ENCODE measurements at regions of chr1 and their contacts with region 1.

Region 1: GRCh38 chr1:232629250-232630046 is 485 bp downstream of the SIPA1L2 start:
- DNase-seq: peak; percentile 45 to 46
- H3K4me3 ChIP-seq: peak overlapping the region; percentile 5 to 62 (median 32)
- H3K27ac ChIP-seq: peak overlapping the region in 2 of 3 donors; percentile 41 to 59
- H3K4me1 ChIP-seq: peaks cover 21 to 24% of the 10 kb centered on the region in 2 donors
- H3K27me3 ChIP-seq: no peaks in the 10 kb centered on the region
- CTCF ChIP-seq: peak in 1 of 6 experiments; percentile 3
- POLR2A ChIP-seq: no peak

Region 2: GRCh38 chr1:231866392-231867331 is 762.8 kb before region 1 on chr1:
- intact Hi-C with region 1: loop called (anchors 10 kb)
- DNase-seq: peak; percentile 51 to 61
- H3K4me3 ChIP-seq: no peak overlapping the region
- H3K27ac ChIP-seq: no peak overlapping the region
- H3K4me1 ChIP-seq: peaks cover 16 to 17% of the 10 kb centered on the region in 2 donors
- H3K27me3 ChIP-seq: no peaks in the 10 kb centered on the region
- CTCF ChIP-seq: peak; percentile 66 to 87 (median 82)
- POLR2A ChIP-seq: no peak

Region 3: DNA sequence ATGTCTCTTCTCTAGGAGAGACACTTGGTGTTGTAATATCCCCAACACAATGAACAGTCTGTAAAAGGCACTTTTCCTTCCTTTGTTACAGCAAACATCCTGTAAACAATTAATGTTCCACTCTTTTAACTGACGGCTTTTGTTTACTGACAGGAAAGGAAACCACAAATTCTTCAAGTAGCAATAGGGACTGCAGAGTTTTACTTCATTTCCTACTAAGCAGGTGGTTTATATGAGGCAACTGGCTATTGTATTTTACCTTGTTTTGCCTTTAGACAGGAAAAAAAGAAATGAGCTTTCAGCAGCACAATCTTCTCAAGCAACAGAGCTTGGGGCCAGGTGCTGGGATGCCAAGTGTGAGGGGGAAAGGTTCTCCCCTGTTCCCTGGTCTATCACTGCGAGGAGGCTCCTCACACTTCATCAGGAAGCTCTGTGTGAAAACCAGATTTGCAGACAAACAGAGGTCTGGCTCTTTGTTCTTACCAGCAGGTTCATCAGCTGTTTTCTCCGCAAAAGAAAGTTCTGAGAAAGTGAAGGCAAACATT is 50.7 kb before region 1 on chr1:
- intact Hi-C with region 1: no loop called
- DNase-seq: no peak
- H3K4me3 ChIP-seq: no peak overlapping the region
- H3K27ac ChIP-seq: peak overlapping the region in 1 of 3 donors; percentile 42
- H3K4me1 ChIP-seq: peaks cover 6 to 27% of the 10 kb centered on the region in 2 donors
- H3K27me3 ChIP-seq: no peaks in the 10 kb centered on the region
- CTCF ChIP-seq: no peak
- POLR2A ChIP-seq: no peak

Region 4: GRCh38 chr1:232950197-232951176 is 321.0 kb after region 1 on chr1 and contains the start of gene NTPCR:
- intact Hi-C with region 1: no loop called
- DNase-seq: peak; percentile 88 to 93
- H3K4me3 ChIP-seq: peak within 1 kb of the TSS; percentile 6 to 88 (median 60)
- H3K27ac ChIP-seq: peak within 1 kb of the TSS; percentile 63 to 81 (median 77)
- H3K4me1 ChIP-seq: peaks cover 7 to 23% of the 10 kb centered on the region in 2 donors
- H3K27me3 ChIP-seq: no peaks in the 10 kb centered on the region
- CTCF ChIP-seq: peak in 2 of 6 experiments; percentile 15 to 29
- POLR2A ChIP-seq: peak in 1 of 2 donors; percentile 67
- total RNA-seq, gene NTPCR: 32.3 to 53.5 (median 43.5) TPM

Measured in thyroid gland (tissue), 4 donors.